Esophagus muscularis mucosa (tissue), 4 donors: ENCODE measurements at regions of chr17 and their contacts with region 1.

Region 1: GRCh38 chr17:27446569-27447301 is 9.5 kb upstream of the KSR1 start:
- DNase-seq: no peak
- H3K4me3 ChIP-seq: no peak overlapping the region
- H3K27ac ChIP-seq: no peak overlapping the region
- H3K4me1 ChIP-seq: no peaks in the 10 kb centered on the region
- H3K27me3 ChIP-seq: no peaks in the 10 kb centered on the region
- CTCF ChIP-seq: no peak
- EP300 ChIP-seq: no peak
- POLR2A ChIP-seq: no peak

Region 2: DNA sequence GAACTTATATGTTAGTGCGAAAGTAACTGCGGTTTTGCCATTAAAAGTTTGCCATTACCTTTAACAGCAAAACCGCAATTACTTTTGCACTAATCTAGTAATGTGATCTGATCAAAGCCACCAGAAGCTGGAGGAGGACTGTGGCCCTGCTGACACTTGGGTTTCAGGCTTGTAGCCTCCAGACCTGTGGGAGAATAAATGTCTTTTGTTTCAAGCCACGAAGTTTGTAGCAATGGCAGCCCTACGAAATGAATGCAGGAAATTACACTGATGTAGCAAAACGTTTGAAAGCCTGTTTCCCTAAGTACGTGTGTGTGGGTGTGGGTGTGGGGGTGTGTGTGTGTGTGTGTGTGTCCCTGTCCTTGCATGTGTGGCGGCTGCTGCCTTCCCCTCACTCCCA is 86.2 kb before region 1 on chr17:
- intact Hi-C with region 1: loop called (anchors 5 kb)
- DNase-seq: no peak
- H3K4me3 ChIP-seq: no peak overlapping the region
- H3K27ac ChIP-seq: no peak overlapping the region
- H3K4me1 ChIP-seq: peaks cover 0 to 15% (median 11%) of the 10 kb centered on the region in 4 donors
- H3K27me3 ChIP-seq: no peaks in the 10 kb centered on the region
- CTCF ChIP-seq: no peak
- EP300 ChIP-seq: no peak
- POLR2A ChIP-seq: no peak

Region 3: GRCh38 chr17:27381007-27381501 is 65.7 kb before region 1 on chr17:
- intact Hi-C with region 1: no loop called
- DNase-seq: no peak
- H3K4me3 ChIP-seq: no peak overlapping the region
- H3K27ac ChIP-seq: no peak overlapping the region
- H3K4me1 ChIP-seq: peaks cover 16 to 37% (median 32%) of the 10 kb centered on the region in 4 donors
- H3K27me3 ChIP-seq: no peaks in the 10 kb centered on the region
- CTCF ChIP-seq: peak; percentile 47 to 77 (median 52)
- EP300 ChIP-seq: no peak
- POLR2A ChIP-seq: no peak

Region 4: GRCh38 chr17:27601069-27601975 is 154.6 kb after region 1 on chr17:
- intact Hi-C with region 1: no loop called
- DNase-seq: peak; percentile 95
- H3K4me3 ChIP-seq: no peak overlapping the region
- H3K27ac ChIP-seq: no peak overlapping the region
- H3K4me1 ChIP-seq: peaks cover 3 to 31% (median 14%) of the 10 kb centered on the region in 4 donors
- H3K27me3 ChIP-seq: no peaks in the 10 kb centered on the region
- CTCF ChIP-seq: peak; percentile 90 to 95 (median 94)
- EP300 ChIP-seq: no peak
- POLR2A ChIP-seq: no peak